ENCODE measurements at regions of chr9 and their contacts with region 1.

Region 1: GRCh38 chr9:92790542-92791527 is 26.2 kb upstream of the BICD2 start:
- DNase-seq: peak; percentile 85

Region 2: GRCh38 chr9:92648474-92649372 is 142.1 kb before region 1 on chr9:
- intact Hi-C with region 1: loop called (anchors 10 kb)
- DNase-seq: peak; percentile 62

Region 3: DNA sequence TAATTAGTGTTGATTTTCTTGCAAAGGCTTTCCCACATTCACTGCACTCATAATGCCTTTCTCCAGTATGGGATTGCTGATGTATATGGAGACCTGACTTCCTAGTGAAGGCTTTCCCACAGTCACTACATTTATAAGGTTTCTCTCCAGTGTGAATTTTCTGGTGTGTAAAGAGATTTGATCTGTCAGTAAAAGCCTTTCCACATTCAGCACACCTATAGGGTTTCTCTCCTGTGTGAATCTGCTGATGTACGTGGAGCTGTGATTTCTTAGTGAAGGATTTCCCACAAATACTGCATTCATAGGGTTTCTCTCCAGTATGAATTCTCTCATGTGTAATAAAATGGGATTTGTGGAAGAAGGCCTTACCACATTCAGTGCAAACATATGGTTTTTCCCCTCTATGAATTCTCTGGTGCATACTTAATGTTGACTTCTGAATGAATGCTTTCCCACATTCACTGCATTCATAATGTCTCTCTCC is 55.9 kb after region 1 on chr9:
- intact Hi-C with region 1: no loop called
- DNase-seq: no peak